HEK293 (cell line): ENCODE measurements at regions of chr16 and their contacts with region 1.

Region 1: GRCh38 chr16:56426585-56426984 is 1.2 kb upstream of the AMFR start:
- H3K4me3 ChIP-seq: no peak overlapping the region
- H3K27ac ChIP-seq: no peak overlapping the region
- H3K4me1 ChIP-seq: peaks cover 15% of the 10 kb centered on the region
- CTCF ChIP-seq: no peak

Region 2: DNA sequence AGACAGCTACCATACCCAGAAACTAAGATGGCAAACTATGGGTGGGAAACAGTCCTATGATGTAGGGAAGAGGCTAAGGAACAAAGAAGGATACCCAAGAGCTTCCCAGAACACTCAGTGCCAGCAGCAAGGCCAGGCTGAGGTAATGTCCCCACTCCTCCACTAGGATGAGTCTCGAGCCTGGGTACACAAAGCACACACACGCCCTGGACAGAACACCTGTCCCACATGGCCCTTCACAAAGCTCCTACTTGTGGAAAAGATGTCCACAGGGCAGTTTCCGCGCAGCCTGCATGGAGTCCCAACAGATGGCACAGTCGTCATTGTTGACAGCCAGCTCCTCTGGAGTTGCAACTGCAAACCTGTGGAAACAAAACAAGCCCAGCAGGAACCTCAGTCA is 25.1 kb before region 1 on chr16:
- CTCF ChIA-PET with region 1: no interaction called
- POLR2A ChIA-PET with region 1: no interaction called
- H3K4me3 ChIP-seq: no peak overlapping the region
- H3K27ac ChIP-seq: no peak overlapping the region
- H3K4me1 ChIP-seq: no peaks in the 10 kb centered on the region
- CTCF ChIP-seq: no peak

Region 3: DNA sequence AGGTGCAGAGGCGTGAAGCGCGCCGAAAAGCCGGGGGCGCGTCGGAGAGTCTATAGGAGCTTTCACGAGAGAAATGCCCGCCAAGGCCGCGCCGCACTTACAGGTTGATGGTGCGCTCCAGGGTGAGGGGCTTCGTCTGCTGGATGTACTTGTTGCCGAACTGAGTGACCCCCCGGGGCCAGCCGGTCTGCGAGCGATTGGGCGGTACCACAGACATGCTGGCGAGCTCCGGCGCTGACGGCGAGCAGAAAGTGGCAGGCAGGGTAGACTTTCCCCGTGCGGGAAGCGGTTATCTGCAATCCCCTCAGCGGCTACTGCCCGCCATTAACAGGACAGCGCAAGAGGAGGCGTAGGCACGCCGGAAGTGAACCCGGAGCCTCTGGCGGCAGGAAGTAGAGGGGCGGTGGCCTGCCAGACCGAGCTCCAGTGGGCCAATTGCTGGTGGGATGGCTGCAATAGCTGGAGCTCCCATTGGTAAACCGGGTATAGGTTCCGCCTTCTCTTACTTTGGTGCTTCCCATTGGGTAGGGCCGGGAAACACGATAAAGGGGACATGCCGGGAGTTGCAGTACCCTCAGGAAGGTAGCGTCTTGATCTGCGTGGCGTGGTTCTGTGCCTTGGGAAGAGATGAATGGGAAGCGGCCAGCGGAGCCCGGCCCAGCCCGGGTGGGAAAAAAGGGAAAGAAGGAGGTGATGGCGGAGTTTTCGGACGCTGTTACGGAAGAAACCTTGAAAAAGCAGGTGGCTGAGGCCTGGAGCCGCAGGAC is 24.6 kb after region 1 on chr16 and contains the starts of genes NUDT21 and OGFOD1:
- CTCF ChIA-PET with region 1: interaction called, 4 read pairs
- POLR2A ChIA-PET with region 1: interaction called, 12 read pairs
- H3K4me3 ChIP-seq: peak within 1 kb of the TSS; percentile 67
- H3K27ac ChIP-seq: peak within 1 kb of the TSS; percentile 78
- H3K4me1 ChIP-seq: peaks cover 5% of the 10 kb centered on the region; the same call in 1 of the 2 replicates
- CTCF ChIP-seq: 0 out of 2 replicates have a peak, but pooled peaks have one; percentile 6